T-cell (primary cell): ENCODE measurements at regions of chr3 and their contacts with region 1.

Region 1: DNA sequence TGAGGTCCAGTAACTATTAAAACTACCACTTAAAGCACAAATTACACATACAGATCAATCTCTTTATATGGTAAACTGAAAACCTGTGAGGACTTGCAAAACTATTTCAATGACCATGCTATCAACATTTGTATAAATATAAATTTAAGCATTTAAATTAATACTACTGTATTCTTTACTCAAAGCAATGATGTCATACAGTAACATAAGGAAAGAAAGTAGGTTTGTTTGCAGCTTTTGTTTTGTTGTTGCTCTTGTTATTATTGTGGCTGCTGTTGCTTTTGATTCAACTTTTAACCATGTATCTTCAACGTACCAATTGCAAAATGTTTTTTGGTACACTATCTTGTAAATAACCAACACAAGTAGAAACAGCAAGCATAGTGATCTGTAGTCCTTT is 22.0 kb downstream of the CBLB start:
- DNase-seq: no peak
- ATAC-seq: no peak
- H3K4me3 ChIP-seq: no peak overlapping the region
- H3K4me3 Mint-ChIP-seq: peak overlapping the region in 1 of 3 donors; percentile 24
- H3K27ac ChIP-seq: peak overlapping the region; percentile 7
- H3K27ac Mint-ChIP-seq: peak overlapping the region in 1 of 2 donors; percentile 76
- H3K4me1 ChIP-seq: peaks cover 3 to 15% of the 10 kb centered on the region in 2 experiments
- H3K4me1 Mint-ChIP-seq: peaks cover 57 to 73% (median 70%) of the 10 kb centered on the region in 3 donors
- H3K27me3 ChIP-seq: no peaks in the 10 kb centered on the region
- H3K27me3 Mint-ChIP-seq: no peaks in the 10 kb centered on the region

Region 2: DNA sequence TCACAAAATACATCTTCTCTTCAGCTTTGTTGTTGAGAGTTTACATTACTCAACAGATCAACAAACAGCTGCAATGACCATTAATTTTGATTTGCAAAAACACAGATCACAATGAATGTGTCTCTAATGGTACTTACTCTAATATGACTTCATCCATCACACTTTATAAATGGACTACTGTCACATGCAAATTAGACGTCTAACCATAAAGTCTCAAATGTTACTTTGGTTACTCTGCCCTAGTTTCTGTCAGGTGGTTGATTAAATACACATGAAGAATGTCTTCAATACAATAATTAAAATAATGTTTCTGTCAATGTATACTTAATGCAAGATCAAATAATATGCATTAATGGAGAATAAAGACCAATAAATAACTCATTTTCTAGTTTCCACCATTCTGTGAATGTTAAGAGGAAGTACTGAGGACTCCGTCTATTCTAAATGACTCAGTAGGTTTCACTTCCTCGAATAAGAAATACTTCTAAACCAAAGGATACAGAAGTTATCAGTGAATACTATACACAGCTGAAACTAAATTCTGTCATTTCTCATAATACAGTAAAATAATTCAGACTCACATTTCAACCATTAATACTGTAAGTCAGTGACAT is 123.8 kb before region 1 on chr3:
- CTCF ChIA-PET with region 1: no interaction called
- POLR2A ChIA-PET with region 1: interaction called in 1 of 2 experiments, 12 read pairs
- DNase-seq: peak in 1 of 35 experiments; percentile 21
- ATAC-seq: peak; percentile 42 to 85 (median 66)
- H3K4me3 ChIP-seq: no peak overlapping the region
- H3K4me3 Mint-ChIP-seq: no peak overlapping the region
- H3K27ac ChIP-seq: peak overlapping the region; percentile 4
- H3K27ac Mint-ChIP-seq: peak overlapping the region; percentile 43 to 68
- H3K4me1 ChIP-seq: peaks cover 0 to 8% of the 10 kb centered on the region in 2 experiments
- H3K4me1 Mint-ChIP-seq: peaks cover 25 to 32% (median 30%) of the 10 kb centered on the region in 3 donors
- H3K27me3 ChIP-seq: no peaks in the 10 kb centered on the region
- H3K27me3 Mint-ChIP-seq: no peaks in the 10 kb centered on the region

Region 3: DNA sequence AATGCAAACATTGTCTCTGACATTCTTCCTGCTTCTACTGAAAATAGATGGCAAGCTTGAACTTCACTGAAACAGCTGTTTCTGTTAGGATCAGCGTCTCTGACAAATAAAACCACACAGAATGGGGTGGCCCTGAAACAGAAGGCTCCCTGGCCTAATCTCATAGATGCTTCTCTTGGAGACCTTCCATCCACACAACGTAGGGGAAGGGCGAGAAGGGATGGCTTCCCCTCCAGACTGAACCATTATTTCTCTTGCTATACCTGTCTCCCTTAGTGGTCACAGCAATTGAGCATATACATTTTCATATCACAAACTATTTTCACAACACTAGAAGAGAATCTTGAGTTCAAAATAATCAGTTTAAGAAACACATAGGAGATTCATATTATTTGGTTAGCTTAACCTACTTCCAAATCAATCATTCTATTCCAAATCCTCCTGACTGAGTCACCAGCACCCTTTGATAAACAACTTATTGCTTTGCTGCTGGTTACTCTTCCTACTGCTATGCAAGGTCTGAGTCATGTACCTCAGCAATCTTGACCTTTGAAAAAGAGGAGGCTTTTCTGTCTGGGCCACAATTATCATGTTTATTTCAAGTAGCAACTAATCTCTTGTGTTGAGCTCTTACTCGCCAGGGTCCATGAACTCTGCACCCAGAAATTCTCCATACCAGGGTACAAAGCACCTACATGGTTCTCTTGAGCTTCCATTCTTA is 23.5 kb before region 1 on chr3:
- CTCF ChIA-PET with region 1: no interaction called
- POLR2A ChIA-PET with region 1: no interaction called
- DNase-seq: no peak
- ATAC-seq: peak in 2 of 4 experiments; percentile 65 to 74
- H3K4me3 ChIP-seq: no peak overlapping the region
- H3K4me3 Mint-ChIP-seq: peak overlapping the region in 2 of 3 donors; percentile 17 to 22
- H3K27ac ChIP-seq: peak overlapping the region; percentile 21
- H3K27ac Mint-ChIP-seq: peak overlapping the region; percentile 88
- H3K4me1 ChIP-seq: peaks cover 3 to 13% of the 10 kb centered on the region in 2 experiments
- H3K4me1 Mint-ChIP-seq: peaks cover 75 to 83% (median 76%) of the 10 kb centered on the region in 3 donors
- H3K27me3 ChIP-seq: no peaks in the 10 kb centered on the region
- H3K27me3 Mint-ChIP-seq: no peaks in the 10 kb centered on the region